ENCODE measurements at regions of chr1 and their contacts with region 1.

Region 1: DNA sequence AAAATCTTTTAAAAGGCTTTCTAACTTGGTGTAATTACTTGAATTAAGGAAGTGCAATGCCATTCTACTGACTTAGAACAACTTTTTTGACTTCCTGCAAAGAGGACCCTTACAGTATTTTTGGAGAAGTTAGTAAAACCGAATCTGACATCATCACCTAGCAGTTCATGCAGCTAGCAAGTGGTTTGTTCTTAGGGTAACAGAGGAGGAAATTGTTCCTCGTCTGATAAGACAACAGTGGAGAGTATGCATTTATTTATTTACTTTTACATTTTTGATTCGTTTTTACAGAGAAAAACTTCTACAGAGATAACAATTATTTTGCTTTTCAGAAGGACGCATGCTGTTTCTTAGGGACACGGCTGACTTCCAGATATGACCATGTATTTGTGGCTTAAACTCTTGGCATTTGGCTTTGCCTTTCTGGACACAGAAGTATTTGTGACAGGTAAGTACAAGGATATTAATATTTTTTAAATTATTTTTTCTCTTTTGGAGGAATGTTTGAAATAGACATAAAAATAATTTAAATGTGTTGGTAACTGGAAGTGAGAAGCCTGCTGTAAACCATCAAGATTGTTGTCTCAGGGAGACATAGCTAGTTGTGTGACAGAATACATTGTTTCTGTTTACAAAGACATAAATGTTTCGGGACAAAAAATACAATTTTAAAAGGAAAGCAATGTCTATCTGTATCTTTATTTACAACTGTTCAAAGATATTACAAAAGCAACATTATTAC is at the start of gene PTPRC:
- DNase-seq: no peak
- H3K4me3 Mint-ChIP-seq: peak within 1 kb of the TSS; percentile 94
- H3K27ac Mint-ChIP-seq: peak within 1 kb of the TSS; percentile 98
- H3K4me1 Mint-ChIP-seq: peaks cover 50% of the 10 kb centered on the region
- H3K27me3 Mint-ChIP-seq: no peaks in the 10 kb centered on the region
- total RNA-seq, gene PTPRC: 724 to 731 TPM

Region 2: GRCh38 chr1:198520524-198521254 is 118.4 kb before region 1 on chr1:
- CTCF ChIA-PET with region 1: interaction called, 9 read pairs
- POLR2A ChIA-PET with region 1: interaction called, 67 read pairs
- DNase-seq: no peak
- H3K4me3 Mint-ChIP-seq: peak overlapping the region; percentile 53
- H3K27ac Mint-ChIP-seq: peak overlapping the region; percentile 81
- H3K4me1 Mint-ChIP-seq: peaks cover 63% of the 10 kb centered on the region
- H3K27me3 Mint-ChIP-seq: no peaks in the 10 kb centered on the region

Region 3: GRCh38 chr1:198612471-198613260 is 26.4 kb before region 1 on chr1:
- CTCF ChIA-PET with region 1: interaction called, 3 read pairs
- POLR2A ChIA-PET with region 1: interaction called, 94 read pairs
- DNase-seq: no peak
- H3K4me3 Mint-ChIP-seq: peak overlapping the region; percentile 79
- H3K27ac Mint-ChIP-seq: peak overlapping the region; percentile 93
- H3K4me1 Mint-ChIP-seq: peaks cover 70% of the 10 kb centered on the region
- H3K27me3 Mint-ChIP-seq: no peaks in the 10 kb centered on the region

Region 4: DNA sequence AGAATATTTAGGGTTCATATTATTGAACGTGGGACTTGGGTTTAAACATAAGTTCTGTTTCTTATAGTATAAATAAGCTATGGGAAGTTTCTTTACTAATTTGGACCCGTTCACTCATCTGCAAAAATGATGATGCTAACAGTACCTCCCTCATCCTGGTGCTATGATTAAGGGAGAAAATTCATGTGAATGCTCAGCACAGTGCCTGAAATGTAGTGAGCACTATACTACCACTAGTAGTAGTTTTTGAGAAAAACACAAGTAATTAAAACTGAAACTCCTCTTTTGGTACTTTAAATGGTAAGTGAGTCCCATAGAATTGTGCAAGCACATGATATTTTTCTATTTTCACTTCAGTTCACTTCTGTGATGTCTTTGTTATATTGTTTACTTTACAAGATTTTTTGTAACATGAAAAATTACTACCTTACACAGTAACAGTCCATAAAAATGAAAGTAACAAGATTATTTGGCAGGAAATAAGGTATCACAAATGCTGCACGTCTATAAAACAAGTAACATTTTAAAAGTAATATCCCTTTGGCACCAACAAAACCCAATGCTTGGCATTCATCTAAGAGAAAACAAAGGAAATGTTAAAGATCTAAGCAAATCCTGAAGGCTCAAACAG is 11.5 kb before region 1 on chr1:
- CTCF ChIA-PET with region 1: interaction called, 99 read pairs
- POLR2A ChIA-PET with region 1: interaction called, 512 read pairs
- DNase-seq: no peak
- H3K4me3 Mint-ChIP-seq: peak overlapping the region; percentile 40
- H3K27ac Mint-ChIP-seq: peak overlapping the region; percentile 81
- H3K4me1 Mint-ChIP-seq: peaks cover 90% of the 10 kb centered on the region
- H3K27me3 Mint-ChIP-seq: no peaks in the 10 kb centered on the region

Region 5: DNA sequence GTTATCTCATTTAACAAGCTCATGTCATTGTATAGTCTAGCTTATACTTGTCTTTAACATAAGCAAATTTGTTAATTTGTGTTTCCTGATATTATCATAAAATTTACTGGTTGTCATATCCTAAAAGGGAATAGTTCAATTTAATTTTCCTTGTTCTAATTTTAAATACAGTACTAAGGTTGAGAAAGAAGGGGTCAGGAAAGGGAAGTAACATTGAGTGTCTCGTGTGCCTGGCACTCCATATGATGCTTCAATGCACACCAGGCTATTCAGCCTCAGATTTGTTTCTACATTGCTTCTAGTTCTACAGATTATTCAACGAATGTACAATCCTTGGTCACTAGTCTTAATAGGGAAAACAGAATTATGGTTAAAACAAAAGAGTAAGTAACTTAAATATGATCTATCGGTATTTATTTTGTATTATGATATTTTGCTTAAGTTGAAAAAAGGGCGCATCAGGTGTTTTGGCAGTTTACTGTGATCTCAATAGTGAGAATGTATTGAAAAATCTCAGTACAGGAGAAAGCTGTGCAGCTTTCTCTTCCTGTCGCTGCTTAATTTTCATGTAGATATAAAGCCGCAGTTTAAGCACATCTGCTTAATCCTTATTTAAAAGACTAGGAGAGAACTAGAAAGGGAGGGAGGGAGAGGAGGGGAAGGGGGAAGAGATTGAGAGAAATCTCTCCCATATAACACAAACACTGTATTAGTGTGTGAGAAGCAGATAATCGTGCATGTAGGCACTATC is 12.8 kb after region 1 on chr1:
- CTCF ChIA-PET with region 1: interaction called, 5 read pairs
- POLR2A ChIA-PET with region 1: interaction called, 99 read pairs
- DNase-seq: no peak
- H3K4me3 Mint-ChIP-seq: peak overlapping the region; percentile 65
- H3K27ac Mint-ChIP-seq: peak overlapping the region; percentile 67
- H3K4me1 Mint-ChIP-seq: peaks cover 78% of the 10 kb centered on the region
- H3K27me3 Mint-ChIP-seq: no peaks in the 10 kb centered on the region

Region 6: DNA sequence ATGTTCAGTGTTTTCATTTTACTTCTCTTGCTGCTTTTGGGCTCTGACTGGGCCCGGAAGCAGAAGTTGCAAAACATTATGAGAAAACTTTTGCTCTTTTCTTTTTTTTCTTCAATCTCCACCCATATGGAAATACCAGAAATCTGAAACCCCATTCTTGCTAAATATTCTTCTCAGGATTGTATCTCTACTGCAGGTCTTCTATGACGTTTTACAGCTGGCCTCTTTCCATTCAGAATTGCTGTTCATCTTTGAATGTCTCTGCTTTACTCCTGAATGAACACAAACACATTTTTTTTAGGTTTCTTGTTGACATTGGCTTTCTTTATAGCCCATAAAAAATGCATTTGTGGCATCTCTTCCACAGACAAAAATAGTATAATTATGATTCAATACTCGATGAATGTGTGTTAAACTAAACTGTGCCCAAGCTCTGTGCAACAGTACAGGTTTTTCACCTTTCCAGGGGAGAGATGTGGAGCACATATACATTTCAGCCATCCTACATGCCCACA is 18.5 kb after region 1 on chr1:
- CTCF ChIA-PET with region 1: interaction called, 3 read pairs
- POLR2A ChIA-PET with region 1: interaction called, 99 read pairs
- DNase-seq: no peak
- H3K4me3 Mint-ChIP-seq: peak overlapping the region; percentile 65
- H3K27ac Mint-ChIP-seq: peak overlapping the region; percentile 81
- H3K4me1 Mint-ChIP-seq: peaks cover 71% of the 10 kb centered on the region
- H3K27me3 Mint-ChIP-seq: no peaks in the 10 kb centered on the region

Region 7: DNA sequence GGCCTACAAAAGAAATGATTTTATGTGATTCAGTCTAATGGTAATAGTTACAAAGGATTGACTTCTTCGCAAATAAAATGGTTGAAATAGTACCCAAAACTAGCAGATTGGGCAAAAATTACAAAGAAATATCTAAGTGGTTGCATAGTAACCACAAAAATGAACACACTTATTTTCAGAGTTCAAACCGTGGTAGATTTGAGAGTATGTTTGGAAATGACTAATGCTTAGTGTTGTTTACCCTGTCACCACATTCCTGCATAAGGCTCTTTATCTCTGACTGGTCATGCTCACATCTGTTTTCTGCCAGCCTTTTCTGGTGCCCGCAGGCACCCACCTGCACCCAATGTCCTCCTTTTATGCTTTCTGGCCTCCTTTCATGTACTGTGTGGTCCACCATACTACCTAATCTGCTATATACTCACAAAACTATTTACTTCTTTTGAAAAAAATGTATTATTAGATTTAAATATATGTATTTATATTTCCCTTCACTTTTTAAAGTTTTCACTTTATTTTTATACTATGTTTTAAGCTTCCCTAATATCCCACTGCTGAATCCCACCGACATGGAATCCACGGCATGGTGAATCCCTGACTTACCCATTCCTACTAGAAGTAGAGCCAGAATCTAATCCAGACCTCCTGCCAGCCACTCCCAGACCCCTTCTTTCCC is 30.1 kb after region 1 on chr1:
- CTCF ChIA-PET with region 1: no interaction called
- POLR2A ChIA-PET with region 1: interaction called, 288 read pairs
- DNase-seq: peak; percentile 60
- H3K4me3 Mint-ChIP-seq: peak overlapping the region; percentile 41
- H3K27ac Mint-ChIP-seq: peak overlapping the region; percentile 87
- H3K4me1 Mint-ChIP-seq: peaks cover 88% of the 10 kb centered on the region
- H3K27me3 Mint-ChIP-seq: no peaks in the 10 kb centered on the region

Measured in activated CD4-positive, alpha-beta memory T cell treated with anti-CD3 and anti-CD28 coated beads, Interleukin-2, amount 10 ng/mL, durations not matched to agents 7 days and 5 days (primary cell).